Activated naive CD4-positive, alpha-beta T cell treated with anti-CD3 and anti-CD28 coated beads, Interleukin-2, amount 10 ng/mL, durations not matched to agents 7 days and 5 days (primary cell): ENCODE measurements at regions of chr5 and their contacts with region 1.

Region 1: GRCh38 chr5:81105261-81105877 is 127.8 kb upstream of the CKMT2 start:
- DNase-seq: no peak
- H3K4me3 Mint-ChIP-seq: no peak overlapping the region
- H3K27ac Mint-ChIP-seq: no peak overlapping the region
- H3K4me1 Mint-ChIP-seq: peaks cover 21% of the 10 kb centered on the region
- H3K27me3 Mint-ChIP-seq: no peaks in the 10 kb centered on the region

Region 2: GRCh38 chr5:80686757-80687156 is 418.6 kb before region 1 on chr5:
- CTCF ChIA-PET with region 1: interaction called, 26 read pairs
- DNase-seq: no peak
- H3K4me3 Mint-ChIP-seq: no peak overlapping the region
- H3K27ac Mint-ChIP-seq: no peak overlapping the region
- H3K4me1 Mint-ChIP-seq: peaks cover 23% of the 10 kb centered on the region
- H3K27me3 Mint-ChIP-seq: no peaks in the 10 kb centered on the region

Region 3: GRCh38 chr5:80711938-80712337 is 393.4 kb before region 1 on chr5:
- CTCF ChIA-PET with region 1: interaction called, 10 read pairs
- DNase-seq: no peak
- H3K4me3 Mint-ChIP-seq: no peak overlapping the region
- H3K27ac Mint-ChIP-seq: no peak overlapping the region
- H3K4me1 Mint-ChIP-seq: peaks cover 26% of the 10 kb centered on the region
- H3K27me3 Mint-ChIP-seq: no peaks in the 10 kb centered on the region

Region 4: DNA sequence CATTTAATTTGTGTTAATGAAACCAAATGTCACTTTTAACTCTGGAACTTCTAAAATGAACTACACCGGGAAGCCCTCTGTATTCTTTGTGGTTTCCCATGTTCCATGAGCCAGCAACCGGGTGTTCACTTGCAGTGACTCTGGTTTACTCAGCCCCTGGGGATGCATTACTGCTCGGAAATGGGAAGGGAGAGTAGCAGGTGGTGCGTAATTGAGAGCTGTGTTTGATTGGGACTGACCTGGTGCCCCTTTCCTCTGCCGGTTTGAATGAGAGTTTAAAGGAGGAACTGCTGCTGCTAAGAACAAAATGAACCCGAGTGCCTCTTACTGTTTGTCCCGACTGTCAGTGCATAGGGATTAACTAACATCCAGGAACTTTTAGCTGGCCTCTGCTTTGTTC is 350.5 kb before region 1 on chr5:
- CTCF ChIA-PET with region 1: interaction called, 25 read pairs
- DNase-seq: peak; percentile 23
- H3K4me3 Mint-ChIP-seq: peak overlapping the region; percentile 34
- H3K27ac Mint-ChIP-seq: peak overlapping the region; percentile 50
- H3K4me1 Mint-ChIP-seq: peaks cover 63% of the 10 kb centered on the region
- H3K27me3 Mint-ChIP-seq: no peaks in the 10 kb centered on the region

Region 5: GRCh38 chr5:81091199-81091598 is 14.2 kb before region 1 on chr5:
- CTCF ChIA-PET with region 1: interaction called, 13 read pairs
- DNase-seq: no peak
- H3K4me3 Mint-ChIP-seq: no peak overlapping the region
- H3K27ac Mint-ChIP-seq: no peak overlapping the region
- H3K4me1 Mint-ChIP-seq: no peaks in the 10 kb centered on the region
- H3K27me3 Mint-ChIP-seq: no peaks in the 10 kb centered on the region